Right lobe of liver (tissue), 6 donors: ENCODE measurements at regions of chr11 and their contacts with region 1.

Region 1: DNA sequence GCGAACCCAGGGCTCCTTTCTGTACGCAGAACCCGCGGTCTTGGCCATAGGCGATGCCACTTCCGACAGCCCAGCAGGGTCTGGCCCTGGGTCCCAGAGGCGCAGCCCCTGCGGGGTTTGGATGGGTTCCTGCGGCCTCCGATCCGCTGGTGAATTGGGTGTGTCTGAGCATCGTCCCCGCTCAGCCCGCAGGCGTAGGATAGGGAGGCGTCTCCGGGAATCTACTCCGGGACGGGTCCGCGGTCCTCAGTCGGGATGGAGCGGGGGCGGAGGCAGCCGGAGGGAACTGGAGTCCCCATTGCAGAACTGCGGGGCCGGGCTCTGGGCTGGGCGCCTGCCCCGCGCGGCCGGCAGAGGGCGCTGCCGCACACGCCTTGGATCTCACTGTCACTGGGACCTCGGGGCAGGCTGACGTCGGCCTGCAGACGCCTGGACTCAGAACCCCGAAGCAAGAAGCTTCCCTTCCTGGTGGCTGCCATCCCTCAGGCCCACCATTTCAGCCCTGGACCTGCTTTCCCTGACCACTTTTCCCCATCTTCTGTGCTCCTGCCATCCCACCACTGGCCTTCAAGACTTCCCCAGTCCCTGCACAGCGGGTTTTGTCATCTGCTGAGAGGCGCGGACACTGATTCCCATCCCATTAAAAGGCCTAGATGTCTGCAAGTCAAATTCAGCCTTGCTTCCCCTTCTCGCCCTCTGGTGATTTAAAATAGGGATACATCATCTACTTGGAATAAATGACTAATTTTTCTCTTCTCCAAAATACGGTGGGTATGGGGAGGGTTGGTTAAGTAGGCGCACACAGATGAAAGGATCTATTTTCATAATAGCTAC is 38.3 kb upstream of the CREB3L1 start:
- DNase-seq: peak; percentile 83 to 87 (median 85)
- ATAC-seq: peak; percentile 76 to 85 (median 80)
- H3K4me3 ChIP-seq: peak overlapping the region in 2 of 3 donors; percentile 20 to 32
- H3K27ac ChIP-seq: peak overlapping the region in 2 of 3 donors; percentile 15 to 84
- H3K4me1 ChIP-seq: peaks cover 0 to 24% (median 7%) of the 10 kb centered on the region in 4 donors
- H3K27me3 ChIP-seq: peaks cover 0 to 24% of the 10 kb centered on the region in 2 donors
- CTCF ChIP-seq: peak; percentile 96 to 100 (median 100)
- POLR2A ChIP-seq: no peak

Region 2: GRCh38 chr11:46315033-46315738 is 76.0 kb after region 1 on chr11:
- intact Hi-C with region 1: loop called in 1 of 2 experiments (anchors 5 kb)
- DNase-seq: no peak
- ATAC-seq: peak; percentile 50 to 75 (median 62)
- H3K4me3 ChIP-seq: no peak overlapping the region
- H3K27ac ChIP-seq: no peak overlapping the region
- H3K4me1 ChIP-seq: no peaks in the 10 kb centered on the region
- H3K27me3 ChIP-seq: no peaks in the 10 kb centered on the region
- CTCF ChIP-seq: peak; percentile 77 to 86 (median 82)
- POLR2A ChIP-seq: no peak